CD4-positive, alpha-beta memory T cell (primary cell): ENCODE measurements at regions of chr10 and their contacts with region 1.

Region 1: DNA sequence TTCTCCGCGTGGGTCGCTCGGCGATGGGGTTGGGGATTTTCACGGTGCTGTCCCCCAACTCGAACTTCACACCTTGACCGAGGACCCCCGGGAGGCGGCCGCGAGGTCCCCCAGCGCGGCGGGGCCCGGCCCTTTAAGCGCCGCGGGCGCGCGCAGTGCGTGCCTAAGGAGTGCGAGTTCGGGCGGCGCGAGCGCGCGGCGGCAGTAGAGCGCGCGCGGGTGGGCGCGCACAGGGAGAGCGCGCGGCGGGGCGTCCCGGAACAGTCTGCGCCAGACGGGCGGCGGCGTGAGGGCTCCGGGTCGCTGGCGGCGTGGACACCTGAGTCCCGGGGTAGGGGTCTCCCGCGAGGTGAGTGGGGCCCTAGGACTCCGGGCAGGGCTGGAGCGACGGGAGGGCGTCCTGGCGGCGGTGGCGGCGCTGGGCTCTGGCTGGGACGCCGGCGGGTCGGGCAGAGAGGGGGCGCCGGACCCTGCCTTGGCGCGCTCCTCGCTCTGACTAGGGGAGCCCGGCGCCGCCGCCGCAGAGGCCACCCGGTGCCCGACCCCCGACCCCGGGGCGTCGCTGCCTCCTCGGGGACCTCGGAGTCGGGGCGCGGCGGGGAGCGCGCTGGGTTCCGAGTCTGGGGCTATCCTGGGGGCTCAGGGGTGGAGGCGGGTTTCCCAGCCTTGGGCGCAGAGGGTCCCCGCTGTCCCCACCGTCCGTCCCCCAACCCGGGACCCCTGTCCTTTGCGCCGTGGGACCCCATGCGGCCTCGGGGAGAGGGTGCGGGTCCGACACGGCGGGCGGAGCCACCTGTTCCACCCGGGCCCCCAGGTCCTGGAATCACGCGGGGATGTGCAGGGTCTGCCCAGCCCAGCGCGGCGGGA is at the start of gene PROSER2:
- DNase-seq: peak in 4 of 5 donors; percentile 18 to 39 (median 28)
- H3K4me3 ChIP-seq: no peak within 1 kb of the TSS
- H3K4me3 Mint-ChIP-seq: peak within 1 kb of the TSS; percentile 58 to 85 (median 80)
- H3K27ac ChIP-seq: no peak within 1 kb of the TSS
- H3K27ac Mint-ChIP-seq: peak within 1 kb of the TSS in 2 of 7 donors; percentile 19 to 85
- H3K4me1 ChIP-seq: peaks cover 9% of the 10 kb centered on the region
- H3K4me1 Mint-ChIP-seq: peaks cover 6 to 15% (median 9%) of the 10 kb centered on the region in 4 donors
- H3K27me3 ChIP-seq: no peaks in the 10 kb centered on the region
- H3K27me3 Mint-ChIP-seq: peaks cover 38 to 48% of the 10 kb centered on the region in 2 donors
- total RNA-seq, gene PROSER2: 0.47 to 1.3 TPM

Region 2: GRCh38 chr10:11515596-11516430 is 307.5 kb before region 1 on chr10:
- CTCF ChIA-PET with region 1: interaction called, 3 read pairs
- POLR2A ChIA-PET with region 1: no interaction called
- intact Hi-C with region 1: loop called (anchors 1 kb)
- DNase-seq: peak; percentile 43 to 60 (median 58)
- H3K4me3 ChIP-seq: no peak overlapping the region
- H3K4me3 Mint-ChIP-seq: no peak overlapping the region
- H3K27ac ChIP-seq: no peak overlapping the region
- H3K27ac Mint-ChIP-seq: no peak overlapping the region
- H3K4me1 ChIP-seq: no peaks in the 10 kb centered on the region
- H3K4me1 Mint-ChIP-seq: peaks cover 2 to 4% (median 3%) of the 10 kb centered on the region in 4 donors
- H3K27me3 ChIP-seq: no peaks in the 10 kb centered on the region
- H3K27me3 Mint-ChIP-seq: peaks cover 0 to 2% of the 10 kb centered on the region in 2 donors

Region 3: GRCh38 chr10:11810313-11810766 is 13.0 kb before region 1 on chr10:
- CTCF ChIA-PET with region 1: interaction called, 16 read pairs
- POLR2A ChIA-PET with region 1: no interaction called
- intact Hi-C with region 1: no loop called
- DNase-seq: no peak
- H3K4me3 ChIP-seq: no peak overlapping the region
- H3K4me3 Mint-ChIP-seq: no peak overlapping the region
- H3K27ac ChIP-seq: no peak overlapping the region
- H3K27ac Mint-ChIP-seq: peak overlapping the region in 1 of 7 donors; percentile 30
- H3K4me1 ChIP-seq: no peaks in the 10 kb centered on the region
- H3K4me1 Mint-ChIP-seq: no peaks in the 10 kb centered on the region
- H3K27me3 ChIP-seq: no peaks in the 10 kb centered on the region
- H3K27me3 Mint-ChIP-seq: peaks cover 6 to 17% of the 10 kb centered on the region in 2 donors